HepG2 (cell line): ENCODE measurements at regions of chr11 and their contacts with region 1.

Region 1: DNA sequence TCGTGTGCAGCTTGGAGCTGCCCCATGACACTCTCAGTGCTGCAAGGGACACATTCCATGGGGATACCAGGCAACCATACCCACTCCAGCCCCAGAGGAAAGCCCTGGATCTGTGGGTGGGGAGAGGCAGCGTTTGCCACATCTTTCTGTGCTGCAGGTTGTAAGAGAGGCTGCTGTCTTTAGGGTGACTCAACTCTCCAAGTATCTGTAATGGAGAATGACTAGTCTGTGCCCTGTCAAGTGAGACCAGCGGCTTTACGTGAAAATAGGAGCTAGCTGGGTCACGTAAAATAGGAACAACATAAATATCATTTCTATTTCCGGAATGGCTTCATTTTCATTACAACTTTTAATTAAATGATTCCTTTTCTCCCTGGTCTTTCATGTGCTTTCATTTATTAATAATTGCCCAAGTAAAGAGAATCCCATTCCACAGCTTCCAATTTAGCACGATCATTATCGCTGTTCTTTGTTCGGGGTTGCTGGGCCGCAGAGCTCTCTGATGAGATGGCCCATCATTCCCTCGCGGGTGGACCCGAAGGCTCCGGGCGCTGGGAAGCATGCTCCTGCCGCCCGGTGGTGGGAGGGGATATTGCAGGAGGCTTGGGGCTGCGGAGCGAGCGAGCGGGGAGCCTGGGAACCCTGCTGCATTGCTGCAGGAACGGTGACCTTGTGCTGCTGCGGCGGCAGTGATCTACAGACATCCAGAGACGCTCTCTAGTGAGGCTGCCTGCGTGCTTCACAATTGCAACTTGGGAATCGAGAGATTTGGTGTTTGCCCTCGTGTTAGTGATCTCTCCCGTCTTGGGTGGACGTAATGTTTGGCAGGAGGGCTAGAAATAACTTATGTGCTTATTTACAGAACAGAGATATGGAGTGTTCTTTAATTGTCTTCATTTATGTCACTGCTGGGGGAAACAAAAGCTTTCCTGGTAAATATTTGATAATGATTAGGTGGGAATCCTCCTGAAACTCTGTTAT is 10.6 kb downstream of the SLC6A5 start:
- DNase-seq: peak; percentile 55
- ATAC-seq: peak; percentile 98
- H3K4me3 ChIP-seq: no peak overlapping the region
- H3K27ac ChIP-seq: no peak overlapping the region
- H3K4me1 ChIP-seq: peaks cover 12% of the 10 kb centered on the region; the same call in 1 of the 2 replicates
- H3K27me3 ChIP-seq: peaks cover 0 to 25% of the 10 kb centered on the region in 2 experiments; a peak in 2 of 5 replicates
- CTCF ChIP-seq: peak; percentile 98
- EP300 ChIP-seq: 0 out of 4 replicates have a peak, but pooled peaks of 1 of the 2 experiments have one; percentile 25
- POLR2A ChIP-seq: no peak
- RAD21 ChIP-seq: peak; percentile 92

Region 2: GRCh38 chr11:20387241-20388095 is 222.5 kb before region 1 on chr11 and contains the start of gene PRMT3:
- CTCF ChIA-PET with region 1: interaction called, 18 read pairs
- POLR2A ChIA-PET with region 1: no interaction called
- in situ Hi-C with region 1: loop called (anchors 5 kb)
- intact Hi-C with region 1: no loop called
- DNase-seq: peak; percentile 88
- ATAC-seq: peak; percentile 90
- H3K4me3 ChIP-seq: peak within 1 kb of the TSS; percentile 87 to 99 (median 98)
- H3K27ac ChIP-seq: peak within 1 kb of the TSS; percentile 79
- H3K4me1 ChIP-seq: peaks cover 18% of the 10 kb centered on the region
- H3K27me3 ChIP-seq: no peaks in the 10 kb centered on the region
- CTCF ChIP-seq: peak; percentile 98
- EP300 ChIP-seq: 0 out of 4 replicates have a peak, but pooled peaks of 1 of the 2 experiments have one; percentile 8
- POLR2A ChIP-seq: peak; percentile 81 to 93
- RAD21 ChIP-seq: peak; percentile 63
- total RNA-seq, gene PRMT3: 27.7 and 38.3 TPM in 2 replicates

Region 3: GRCh38 chr11:20397281-20397680 is 212.7 kb before region 1 on chr11:
- CTCF ChIA-PET with region 1: interaction called, 14 read pairs
- POLR2A ChIA-PET with region 1: no interaction called
- in situ Hi-C with region 1: no loop called
- intact Hi-C with region 1: loop called (anchors 1 kb)
- DNase-seq: peak; percentile 35
- ATAC-seq: peak; percentile 85
- H3K4me3 ChIP-seq: no peak overlapping the region
- H3K27ac ChIP-seq: no peak overlapping the region
- H3K4me1 ChIP-seq: no peaks in the 10 kb centered on the region
- H3K27me3 ChIP-seq: no peaks in the 10 kb centered on the region
- CTCF ChIP-seq: peak; percentile 57
- EP300 ChIP-seq: no peak
- POLR2A ChIP-seq: no peak
- RAD21 ChIP-seq: no peak

Region 4: DNA sequence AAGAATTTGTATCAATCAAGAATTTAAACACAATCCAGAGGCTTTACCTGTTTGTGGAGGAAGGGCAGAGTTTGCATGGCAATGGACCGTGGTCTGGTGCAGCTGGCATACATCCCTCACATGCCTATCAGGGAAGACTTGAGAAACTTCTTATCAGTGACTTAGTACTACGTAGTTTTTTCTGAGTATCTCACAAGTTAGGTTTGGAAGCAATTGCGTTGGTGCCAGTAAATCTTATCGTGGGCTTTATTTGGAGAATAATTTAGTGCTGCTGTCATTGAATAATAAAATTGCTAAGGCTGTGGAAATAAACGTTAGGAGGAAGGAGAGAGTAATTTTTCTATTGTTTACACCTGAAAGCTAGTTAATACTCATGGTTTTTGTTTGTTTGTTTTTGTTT is 150.2 kb before region 1 on chr11:
- CTCF ChIA-PET with region 1: no interaction called
- POLR2A ChIA-PET with region 1: no interaction called
- in situ Hi-C with region 1: no loop called
- intact Hi-C with region 1: loop called (anchors 5 kb)
- DNase-seq: no peak
- ATAC-seq: no peak
- H3K4me3 ChIP-seq: no peak overlapping the region
- H3K27ac ChIP-seq: no peak overlapping the region
- H3K4me1 ChIP-seq: peaks cover 5% of the 10 kb centered on the region; the same call in 1 of the 2 replicates
- H3K27me3 ChIP-seq: no peaks in the 10 kb centered on the region
- CTCF ChIP-seq: no peak
- EP300 ChIP-seq: no peak
- POLR2A ChIP-seq: no peak
- RAD21 ChIP-seq: no peak